ENCODE measurements at regions of chr20 and their contacts with region 1.

Region 1: GRCh38 chr20:32779500-32780211 is 17.5 kb downstream of the DNMT3B start:
- DNase-seq: no peak
- H3K4me3 ChIP-seq: no peak overlapping the region
- H3K27ac ChIP-seq: no peak overlapping the region
- H3K4me1 ChIP-seq: no peaks in the 10 kb centered on the region
- H3K27me3 ChIP-seq: no peaks in the 10 kb centered on the region
- CTCF ChIP-seq: no peak
- POLR2A ChIP-seq: no peak

Region 2: DNA sequence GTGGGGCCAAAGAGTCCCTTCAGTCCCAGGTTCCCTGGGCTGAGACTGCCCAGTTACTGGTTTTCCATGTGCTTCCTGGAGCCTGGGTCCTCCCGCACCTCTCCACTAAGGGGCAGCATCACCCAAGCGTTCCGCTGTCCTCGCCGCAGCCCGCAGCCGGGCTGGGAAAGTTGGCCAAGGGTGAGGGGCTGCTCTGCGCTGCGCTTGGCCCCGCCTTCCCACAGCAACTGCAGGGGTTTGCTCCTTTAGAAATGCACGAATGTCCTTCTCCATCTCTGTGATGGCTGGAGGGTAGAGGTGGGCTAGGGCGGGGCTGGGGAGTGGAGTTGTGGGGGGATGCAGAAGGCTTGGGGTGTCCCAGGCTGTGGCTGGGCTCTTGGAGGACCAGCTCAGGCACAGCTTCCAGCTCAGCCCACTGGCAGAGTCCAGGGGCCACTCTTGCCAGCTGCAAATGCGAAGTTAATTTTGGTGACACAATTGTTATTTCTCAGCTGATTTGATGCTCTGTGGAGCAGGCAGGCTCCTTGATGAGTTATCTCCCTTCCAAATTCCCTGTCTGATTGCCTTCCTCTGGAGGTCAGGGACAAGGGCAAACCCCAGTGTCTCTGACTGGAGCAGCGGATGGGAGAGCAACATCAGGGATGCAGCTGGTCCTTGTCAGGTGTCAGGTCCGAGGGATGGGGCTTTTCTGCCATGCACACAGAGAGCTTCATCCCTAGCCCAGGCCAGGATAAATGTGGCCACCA is 257.7 kb before region 1 on chr20:
- CTCF ChIA-PET with region 1: interaction called, 44 read pairs
- POLR2A ChIA-PET with region 1: no interaction called
- dilution Hi-C with region 1: no loop called
- intact Hi-C with region 1: loop called (anchors 5 kb)
- DNase-seq: peak; percentile 53
- H3K4me3 ChIP-seq: no peak overlapping the region
- H3K27ac ChIP-seq: no peak overlapping the region
- H3K4me1 ChIP-seq: peaks cover 16% of the 10 kb centered on the region
- H3K27me3 ChIP-seq: no peaks in the 10 kb centered on the region
- CTCF ChIP-seq: peak; percentile 86 to 90
- POLR2A ChIP-seq: no peak

Region 3: GRCh38 chr20:32674362-32674789 is 105.3 kb before region 1 on chr20:
- CTCF ChIA-PET with region 1: interaction called, 636 read pairs
- POLR2A ChIA-PET with region 1: interaction called, 13 read pairs
- dilution Hi-C with region 1: no loop called
- intact Hi-C with region 1: loop called (anchors 1 kb)
- DNase-seq: peak; percentile 69
- H3K4me3 ChIP-seq: no peak overlapping the region
- H3K27ac ChIP-seq: no peak overlapping the region
- H3K4me1 ChIP-seq: no peaks in the 10 kb centered on the region
- H3K27me3 ChIP-seq: no peaks in the 10 kb centered on the region
- CTCF ChIP-seq: peak; percentile 76 to 87
- POLR2A ChIP-seq: no peak

Region 4: DNA sequence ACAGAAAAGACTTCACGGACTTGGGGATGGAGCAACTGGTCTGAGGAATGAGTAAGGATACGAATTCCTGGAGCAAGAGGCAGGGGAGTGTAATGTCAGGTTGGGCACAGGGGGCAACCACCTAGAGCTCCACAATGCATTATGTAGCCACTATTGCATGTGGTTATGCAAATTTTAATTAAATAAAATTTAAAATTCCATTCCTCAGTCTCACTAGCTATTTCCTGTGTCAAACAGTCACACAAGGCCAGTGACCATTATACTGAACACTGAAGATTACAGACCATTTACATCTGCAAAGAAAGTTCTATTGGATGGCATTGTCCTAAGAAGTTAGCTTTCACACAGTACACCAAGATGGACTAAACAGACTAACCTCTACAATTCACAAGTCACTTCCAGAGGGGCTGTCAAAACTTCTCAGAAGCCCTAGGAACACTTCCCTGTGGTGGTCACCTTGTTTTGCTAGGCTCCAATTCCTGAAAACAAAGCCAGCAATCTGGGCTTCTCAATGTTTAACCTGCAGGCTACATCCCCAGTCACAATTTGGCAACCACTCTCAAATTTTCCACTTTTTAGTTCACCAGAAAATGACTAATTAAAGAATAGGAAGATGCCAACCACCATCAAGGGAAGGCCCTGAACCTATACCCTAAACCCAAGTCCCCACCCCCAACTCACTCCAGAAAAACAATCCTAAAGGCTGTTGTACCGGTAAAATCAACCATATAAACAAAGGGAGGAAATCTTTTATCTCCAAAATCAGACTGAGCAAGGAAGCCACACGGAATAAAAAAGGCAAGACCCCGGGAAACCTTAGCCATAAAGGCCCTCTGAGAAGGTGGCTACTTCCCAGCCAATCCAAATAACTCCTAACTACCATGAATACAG is 71.7 kb before region 1 on chr20:
- CTCF ChIA-PET with region 1: interaction called, 14 read pairs
- POLR2A ChIA-PET with region 1: no interaction called
- dilution Hi-C with region 1: no loop called
- intact Hi-C with region 1: no loop called
- DNase-seq: peak; percentile 86
- H3K4me3 ChIP-seq: no peak overlapping the region
- H3K27ac ChIP-seq: peak overlapping the region; percentile 83
- H3K4me1 ChIP-seq: peaks cover 22% of the 10 kb centered on the region
- H3K27me3 ChIP-seq: no peaks in the 10 kb centered on the region
- CTCF ChIP-seq: no peak
- POLR2A ChIP-seq: no peak

Region 5: DNA sequence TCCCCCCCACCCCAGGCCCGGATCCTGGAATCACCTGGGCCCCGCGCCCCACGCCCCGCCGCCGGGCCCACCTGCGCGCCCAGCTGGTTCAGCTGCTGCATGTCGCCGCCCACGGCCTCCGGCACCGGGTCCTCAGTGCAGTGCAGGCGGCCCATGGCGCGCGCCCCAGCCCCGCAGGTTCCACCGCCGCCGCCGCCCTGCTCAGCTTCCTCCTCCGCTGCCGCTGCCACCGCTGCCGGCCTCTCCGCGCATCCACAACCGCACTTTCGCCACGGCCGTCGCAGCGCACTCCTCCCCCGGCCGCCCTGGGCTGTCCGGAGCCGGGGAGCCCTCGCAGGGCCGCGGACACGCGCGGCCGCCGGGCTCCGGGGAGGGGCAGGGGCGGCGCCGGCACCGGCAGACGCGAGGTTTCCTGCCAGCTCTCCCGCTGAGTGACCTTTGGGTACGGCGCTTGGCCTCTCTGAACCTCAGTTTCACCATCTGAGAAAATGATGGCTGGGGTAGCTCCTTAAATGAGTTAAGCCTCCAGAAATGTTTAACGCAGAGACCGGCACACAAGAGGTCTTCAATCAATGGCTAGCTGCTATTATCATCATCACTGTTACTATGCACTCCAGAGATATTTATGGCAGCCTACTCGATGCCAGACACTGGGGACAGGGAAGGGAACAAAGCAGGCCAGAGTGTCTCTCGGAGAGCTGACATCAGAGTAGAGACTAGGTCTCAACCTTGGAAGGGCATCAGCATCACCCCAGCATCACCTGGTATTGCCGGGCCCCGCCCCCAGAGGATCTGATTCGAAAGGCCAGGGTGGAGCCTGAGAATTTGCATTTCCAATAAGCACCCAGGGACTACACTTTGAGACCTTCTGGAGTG is 36.2 kb before region 1 on chr20 and contains the start of gene COMMD7:
- CTCF ChIA-PET with region 1: interaction called, 22 read pairs
- POLR2A ChIA-PET with region 1: no interaction called
- dilution Hi-C with region 1: no loop called
- intact Hi-C with region 1: no loop called
- DNase-seq: peak; percentile 57
- H3K4me3 ChIP-seq: peak within 1 kb of the TSS; percentile 73 to 90 (median 87)
- H3K27ac ChIP-seq: peak within 1 kb of the TSS; percentile 81
- H3K4me1 ChIP-seq: peaks cover 9% of the 10 kb centered on the region
- H3K27me3 ChIP-seq: no peaks in the 10 kb centered on the region
- CTCF ChIP-seq: no peak
- POLR2A ChIP-seq: no peak
- total RNA-seq, gene COMMD7: 55.9 and 58.8 TPM in 2 replicates

Region 6: DNA sequence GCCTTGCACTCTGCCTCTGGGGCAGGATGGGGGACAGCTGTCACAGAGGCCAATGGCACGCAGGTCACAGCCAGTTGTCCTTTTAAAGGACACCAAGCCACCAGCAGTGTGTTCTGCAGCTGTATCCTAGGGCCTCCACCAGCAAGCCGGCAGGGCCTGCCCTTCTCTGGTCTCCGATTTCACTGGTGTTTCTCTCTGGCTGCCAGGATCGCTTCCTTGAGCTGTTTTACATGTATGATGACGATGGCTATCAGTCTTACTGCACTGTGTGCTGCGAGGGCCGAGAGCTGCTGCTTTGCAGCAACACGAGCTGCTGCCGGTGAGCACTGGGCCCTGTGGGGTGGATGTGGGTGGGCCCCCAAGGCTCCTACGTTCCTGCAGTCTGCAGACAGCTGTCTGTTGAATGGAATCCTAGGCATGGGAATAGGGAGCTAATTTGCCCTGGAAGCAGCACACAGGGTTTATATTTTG is 17.4 kb after region 1 on chr20:
- CTCF ChIA-PET with region 1: interaction called, 16 read pairs
- POLR2A ChIA-PET with region 1: no interaction called
- dilution Hi-C with region 1: no loop called
- intact Hi-C with region 1: no loop called
- DNase-seq: no peak
- H3K4me3 ChIP-seq: no peak overlapping the region
- H3K27ac ChIP-seq: no peak overlapping the region
- H3K4me1 ChIP-seq: peaks cover 10% of the 10 kb centered on the region
- H3K27me3 ChIP-seq: no peaks in the 10 kb centered on the region
- CTCF ChIP-seq: no peak
- POLR2A ChIP-seq: no peak

Region 7: GRCh38 chr20:33053291-33054106 is 273.8 kb after region 1 on chr20 and contains the start of gene BPIFB3:
- CTCF ChIA-PET with region 1: no interaction called
- POLR2A ChIA-PET with region 1: no interaction called
- dilution Hi-C with region 1: no loop called
- intact Hi-C with region 1: no loop called
- DNase-seq: no peak
- H3K4me3 ChIP-seq: no peak within 1 kb of the TSS
- H3K27ac ChIP-seq: no peak within 1 kb of the TSS
- H3K4me1 ChIP-seq: no peaks in the 10 kb centered on the region
- H3K27me3 ChIP-seq: no peaks in the 10 kb centered on the region
- CTCF ChIP-seq: no peak
- POLR2A ChIP-seq: no peak
- total RNA-seq, gene BPIFB3: not detected in 2 replicates